ENCODE measurements at regions of chr3 and their contacts with region 1.

Region 1: DNA sequence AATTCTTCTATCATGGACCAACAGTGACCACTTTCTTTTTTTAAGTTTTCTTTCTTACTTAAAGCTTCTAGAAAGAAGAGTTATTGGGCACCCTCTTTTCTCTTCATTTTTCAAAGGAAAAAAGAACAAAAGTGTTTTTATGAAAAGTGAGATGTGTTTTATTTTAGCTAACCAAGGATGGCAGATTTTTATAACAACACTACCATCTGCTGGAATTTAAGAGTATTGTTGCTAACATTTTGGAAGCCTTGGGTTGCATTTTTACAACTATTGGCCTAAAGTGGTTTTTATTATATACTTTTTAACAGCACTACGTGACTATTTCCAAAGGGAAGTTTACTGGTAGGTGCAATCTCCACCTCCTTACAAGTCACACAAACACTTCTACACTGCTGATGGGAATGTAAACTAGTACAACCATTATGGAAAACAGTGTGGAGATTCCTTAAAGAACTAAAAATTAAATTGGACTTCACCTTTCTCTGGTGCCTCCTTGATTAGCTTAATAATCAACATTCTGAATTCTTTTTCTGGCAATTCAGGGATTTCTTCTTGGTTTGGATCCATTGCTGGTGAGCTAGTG is 237.7 kb upstream of the AGTR1 start:
- DNase-seq: no peak
- H3K4me3 ChIP-seq: no peak overlapping the region
- H3K27ac ChIP-seq: no peak overlapping the region
- H3K4me1 ChIP-seq: no peaks in the 10 kb centered on the region
- H3K27me3 ChIP-seq: no peaks in the 10 kb centered on the region
- CTCF ChIP-seq: peak in 2 of 3 experiments; percentile 25 to 39
- POLR2A ChIP-seq: no peak

Region 2: DNA sequence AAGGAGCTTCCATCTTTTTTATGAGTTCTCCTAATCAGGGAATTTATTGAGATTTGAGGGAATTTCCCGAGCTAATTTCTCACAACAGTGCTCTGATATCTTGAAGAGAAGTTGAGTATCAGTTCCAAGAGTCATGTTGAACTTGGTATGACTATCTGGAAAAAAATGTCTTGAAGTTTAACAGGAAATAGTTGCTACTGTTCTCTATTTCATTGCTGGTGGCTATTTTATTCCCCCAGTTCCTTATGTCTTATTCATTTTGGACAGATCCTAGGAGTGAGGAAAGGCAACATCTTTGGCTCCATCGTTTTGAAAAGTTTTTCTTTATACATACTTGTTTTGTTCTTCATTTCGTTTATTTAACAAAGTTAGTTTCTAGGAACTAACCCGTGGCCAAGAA is 70.1 kb before region 1 on chr3:
- intact Hi-C with region 1: no loop called
- DNase-seq: no peak
- H3K4me3 ChIP-seq: no peak overlapping the region
- H3K27ac ChIP-seq: no peak overlapping the region
- H3K4me1 ChIP-seq: no peaks in the 10 kb centered on the region
- H3K27me3 ChIP-seq: no peaks in the 10 kb centered on the region
- CTCF ChIP-seq: no peak
- POLR2A ChIP-seq: no peak

Region 3: GRCh38 chr3:148546959-148547358 is 86.9 kb after region 1 on chr3:
- intact Hi-C with region 1: loop called (anchors 5 kb)
- DNase-seq: no peak
- H3K4me3 ChIP-seq: no peak overlapping the region
- H3K27ac ChIP-seq: no peak overlapping the region
- H3K4me1 ChIP-seq: no peaks in the 10 kb centered on the region
- H3K27me3 ChIP-seq: no peaks in the 10 kb centered on the region
- CTCF ChIP-seq: no peak
- POLR2A ChIP-seq: no peak

Measured in testis (tissue), 5 donors.